Posterior vena cava (tissue), 2 donors: ENCODE measurements at regions of chr12 and their contacts with region 1.

Region 1: DNA sequence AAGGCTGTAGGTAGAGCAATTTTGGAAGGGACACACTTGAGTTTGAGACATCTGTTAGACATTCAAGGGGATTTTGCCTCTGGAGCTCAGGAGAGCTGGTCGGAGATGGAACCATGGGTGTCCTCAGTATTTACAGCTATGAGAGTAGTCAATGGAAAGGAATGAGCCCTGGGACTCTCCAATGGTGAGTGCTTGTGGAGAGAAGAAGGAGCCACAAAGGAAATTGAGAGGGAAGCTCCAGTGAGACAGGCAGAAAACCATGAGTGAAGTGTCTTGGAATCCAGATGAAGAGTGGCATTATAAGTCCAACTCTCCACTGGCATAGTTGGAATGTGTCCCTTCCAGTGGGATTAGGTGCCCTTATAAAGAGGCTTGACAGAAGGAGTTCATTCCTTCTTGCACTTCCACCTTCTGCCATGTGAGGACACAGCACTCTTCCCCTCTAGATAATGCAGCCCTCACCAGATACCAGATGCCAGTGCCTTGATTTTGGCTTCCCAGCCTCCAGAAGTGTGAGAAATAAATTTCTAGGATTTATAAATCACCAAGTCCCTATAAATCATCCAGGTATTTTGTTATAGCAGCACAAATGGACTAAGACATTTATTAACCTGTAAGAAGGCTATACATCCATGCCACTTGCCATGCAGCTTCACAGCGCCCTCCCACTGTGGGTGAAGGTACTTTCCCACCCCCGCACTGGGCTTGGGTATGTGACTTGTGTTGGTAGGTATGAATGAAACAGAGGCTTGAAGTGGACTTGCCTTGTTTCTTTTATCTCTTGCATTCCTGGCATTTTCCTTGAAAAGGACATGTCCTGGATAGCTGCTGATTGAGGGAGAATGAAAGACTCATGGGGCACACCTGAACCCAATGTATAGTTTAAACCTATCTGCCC is 27.3 kb downstream of the LLPH start:
- DNase-seq: no peak

Region 2: GRCh38 chr12:66725031-66725430 is 621.8 kb after region 1 on chr12:
- intact Hi-C with region 1: loop called in 1 of 2 experiments (anchors 5 kb)
- DNase-seq: no peak